Activated CD8-positive, alpha-beta T cell treated with anti-CD3 and anti-CD28 coated beads for 36 hours (primary cell): ENCODE measurements at regions of chr3 and their contacts with region 1.

Region 1: GRCh38 chr3:137946345-137946973 is 63.5 kb upstream of the CLDN18 start:
- DNase-seq: peak; percentile 73
- ATAC-seq: peak; percentile 42
- H3K4me3 Mint-ChIP-seq: no peak overlapping the region
- H3K27ac Mint-ChIP-seq: no peak overlapping the region
- H3K4me1 Mint-ChIP-seq: no peaks in the 10 kb centered on the region
- H3K27me3 Mint-ChIP-seq: no peaks in the 10 kb centered on the region
- CTCF ChIP-seq: peak; percentile 82

Region 2: DNA sequence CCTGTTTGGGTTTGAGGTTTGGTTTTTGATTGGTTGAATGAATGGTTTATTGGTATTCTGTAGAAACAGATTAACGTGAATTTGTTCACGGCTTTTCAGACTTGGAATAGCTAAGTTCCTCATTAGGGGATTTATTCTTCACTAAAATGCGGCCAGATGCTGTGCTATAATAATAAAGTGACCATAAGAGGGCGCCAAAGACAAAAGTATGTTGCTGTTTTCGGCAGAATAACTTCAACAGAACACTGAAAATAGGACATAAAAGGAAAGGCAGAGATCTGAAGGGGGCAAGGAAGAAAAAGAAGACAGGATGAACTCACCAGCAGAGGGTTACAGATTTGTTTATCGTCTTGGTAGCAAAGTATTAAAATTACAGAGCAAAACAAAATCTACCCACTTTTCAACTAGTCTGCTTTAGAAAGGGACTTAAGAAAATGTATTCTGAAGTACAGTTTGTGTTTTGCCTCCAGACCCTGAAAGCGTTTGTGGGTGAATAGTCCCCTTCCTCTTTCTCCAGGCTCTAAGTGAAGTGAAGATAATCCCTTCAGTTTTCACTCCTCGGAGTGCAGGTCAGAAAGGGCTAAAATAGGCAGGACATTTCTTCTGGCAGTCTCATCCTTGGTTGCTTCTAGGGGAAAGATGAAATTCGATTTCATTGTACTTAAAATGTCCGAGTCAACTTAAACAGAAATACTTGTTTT is 841.0 kb before region 1 on chr3:
- CTCF ChIA-PET with region 1: interaction called, 14 read pairs
- POLR2A ChIA-PET with region 1: no interaction called
- intact Hi-C with region 1: loop called (anchors 5 kb)
- DNase-seq: peak; percentile 13
- ATAC-seq: no peak
- H3K4me3 Mint-ChIP-seq: no peak overlapping the region
- H3K27ac Mint-ChIP-seq: no peak overlapping the region
- H3K4me1 Mint-ChIP-seq: no peaks in the 10 kb centered on the region
- H3K27me3 Mint-ChIP-seq: peaks cover 8% of the 10 kb centered on the region
- CTCF ChIP-seq: peak; percentile 80

Region 3: DNA sequence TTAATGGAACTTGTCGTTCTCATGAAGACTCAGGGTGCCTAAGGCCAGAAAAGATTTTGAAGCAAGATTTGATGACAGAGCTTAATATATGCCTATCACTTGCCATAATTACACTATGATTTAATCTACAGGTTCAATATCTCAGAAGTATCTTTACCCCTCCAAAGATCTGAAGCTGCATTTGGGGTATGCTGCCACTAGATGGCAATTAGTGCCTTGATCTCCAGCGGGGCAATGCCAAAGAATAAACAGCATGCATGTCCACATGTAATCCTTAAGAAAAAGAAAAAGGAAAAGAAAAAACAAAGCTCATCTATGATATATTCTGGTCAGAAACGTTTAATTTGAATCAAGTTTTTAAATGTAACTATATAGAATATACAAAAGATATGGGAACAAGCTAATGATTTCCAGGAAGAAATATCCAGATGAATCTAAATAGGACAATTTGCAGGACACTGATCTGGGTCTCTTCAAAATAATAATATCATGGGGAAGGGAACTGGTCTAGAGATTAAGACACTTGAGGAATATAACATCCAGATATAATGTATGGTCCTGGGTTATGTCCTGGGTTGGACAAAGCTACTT is 237.4 kb before region 1 on chr3:
- CTCF ChIA-PET with region 1: no interaction called
- POLR2A ChIA-PET with region 1: no interaction called
- intact Hi-C with region 1: loop called (anchors 10 kb)
- DNase-seq: no peak
- ATAC-seq: no peak
- H3K4me3 Mint-ChIP-seq: no peak overlapping the region
- H3K27ac Mint-ChIP-seq: no peak overlapping the region
- H3K4me1 Mint-ChIP-seq: no peaks in the 10 kb centered on the region
- H3K27me3 Mint-ChIP-seq: no peaks in the 10 kb centered on the region
- CTCF ChIP-seq: peak; percentile 29

Region 4: GRCh38 chr3:137854533-137855280 is 91.8 kb before region 1 on chr3:
- CTCF ChIA-PET with region 1: no interaction called
- POLR2A ChIA-PET with region 1: no interaction called
- intact Hi-C with region 1: no loop called
- DNase-seq: no peak
- ATAC-seq: no peak
- H3K4me3 Mint-ChIP-seq: no peak overlapping the region
- H3K27ac Mint-ChIP-seq: no peak overlapping the region
- H3K4me1 Mint-ChIP-seq: no peaks in the 10 kb centered on the region
- H3K27me3 Mint-ChIP-seq: peaks cover 3% of the 10 kb centered on the region
- CTCF ChIP-seq: no peak